Heart right ventricle (tissue), 16 donors: ENCODE measurements at regions of chr2 and their contacts with region 1.

Region 1: GRCh38 chr2:106085181-106085940 is 108.7 kb downstream of the UXS1 start:
- DNase-seq: peak in 1 of 2 donors; percentile 61
- ATAC-seq: peak in 7 of 8 donors; percentile 31 to 89 (median 76)
- H3K4me3 ChIP-seq: no peak overlapping the region
- H3K27ac ChIP-seq: peak overlapping the region in 1 of 10 donors; percentile 16
- H3K4me1 ChIP-seq: peaks cover 0 to 5% (median 0%) of the 10 kb centered on the region in 9 donors
- H3K27me3 ChIP-seq: no peaks in the 10 kb centered on the region
- CTCF ChIP-seq: peak in 8 of 9 donors; percentile 26 to 71 (median 54)

Region 2: GRCh38 chr2:105749583-105750400 is 335.6 kb before region 1 on chr2:
- intact Hi-C with region 1: loop called in 3 of 10 experiments (anchors 10 kb)
- DNase-seq: no peak
- ATAC-seq: peak in 1 of 8 donors; percentile 20
- H3K4me3 ChIP-seq: peak overlapping the region in 1 of 10 donors; percentile 7
- H3K27ac ChIP-seq: peak overlapping the region in 1 of 10 donors; percentile 94
- H3K4me1 ChIP-seq: peaks cover 13 to 84% (median 69%) of the 10 kb centered on the region in 9 donors
- H3K27me3 ChIP-seq: no peaks in the 10 kb centered on the region
- CTCF ChIP-seq: no peak

Region 3: GRCh38 chr2:105904938-105905337 is 180.4 kb before region 1 on chr2:
- intact Hi-C with region 1: loop called in 1 of 10 experiments (anchors 10 kb)
- DNase-seq: no peak
- ATAC-seq: no peak
- H3K4me3 ChIP-seq: no peak overlapping the region
- H3K27ac ChIP-seq: no peak overlapping the region
- H3K4me1 ChIP-seq: peaks cover 0 to 40% (median 8%) of the 10 kb centered on the region in 9 donors
- H3K27me3 ChIP-seq: no peaks in the 10 kb centered on the region
- CTCF ChIP-seq: no peak

Region 4: DNA sequence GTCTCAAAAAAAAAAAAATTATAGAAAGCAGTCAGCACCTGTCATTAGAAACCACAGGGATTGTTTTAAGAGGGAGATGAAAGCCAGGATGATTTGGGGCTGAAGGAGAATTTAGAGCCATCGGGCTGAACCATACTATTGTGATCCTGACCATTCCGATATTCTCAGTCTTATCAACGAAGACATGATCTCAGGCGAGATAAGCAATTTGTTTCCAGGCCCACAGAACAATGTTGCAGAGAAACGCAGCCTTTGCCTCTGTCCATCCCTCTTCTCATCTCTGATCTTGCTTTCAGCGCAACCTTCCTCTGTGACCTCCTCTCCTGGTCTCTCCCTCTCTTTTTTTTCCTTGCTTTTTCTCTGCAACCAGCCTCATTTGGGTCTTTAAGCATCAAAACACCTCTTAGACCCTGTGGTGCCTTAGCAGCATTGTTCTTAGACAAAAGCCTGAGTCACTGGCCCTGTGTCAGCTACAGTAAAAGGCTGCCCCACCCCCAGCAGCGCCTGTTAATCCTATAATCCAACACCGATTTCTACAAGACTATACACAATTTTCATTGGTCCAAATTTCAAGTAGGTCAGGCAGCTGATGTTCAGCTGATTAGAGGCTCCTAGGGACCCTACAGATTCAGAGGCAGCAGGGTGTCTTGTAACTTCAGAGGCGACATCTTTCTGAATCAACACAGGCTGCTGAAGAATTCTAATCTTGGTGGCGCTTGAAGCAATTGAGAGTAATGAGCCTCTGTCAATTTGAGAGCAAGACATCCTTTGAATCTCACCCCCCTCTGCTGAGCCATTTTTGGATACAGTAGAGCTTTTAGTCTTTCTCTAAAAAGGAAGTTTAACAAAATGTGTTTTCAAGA is 134.6 kb before region 1 on chr2:
- intact Hi-C with region 1: loop called in 1 of 10 experiments (anchors 10 kb)
- DNase-seq: peak in 1 of 2 donors; percentile 22
- ATAC-seq: peak in 3 of 8 donors; percentile 38 to 71 (median 53)
- H3K4me3 ChIP-seq: no peak overlapping the region
- H3K27ac ChIP-seq: peak overlapping the region in 1 of 10 donors; percentile 0
- H3K4me1 ChIP-seq: peaks cover 0 to 30% (median 12%) of the 10 kb centered on the region in 9 donors
- H3K27me3 ChIP-seq: peaks cover 0 to 5% (median 0%) of the 10 kb centered on the region in 7 donors
- CTCF ChIP-seq: no peak

Region 5: GRCh38 chr2:106175086-106175850 is 89.9 kb after region 1 on chr2:
- intact Hi-C with region 1: no loop called
- DNase-seq: no peak
- ATAC-seq: no peak
- H3K4me3 ChIP-seq: no peak overlapping the region
- H3K27ac ChIP-seq: no peak overlapping the region
- H3K4me1 ChIP-seq: peaks cover 0 to 7% (median 0%) of the 10 kb centered on the region in 9 donors
- H3K27me3 ChIP-seq: no peaks in the 10 kb centered on the region
- CTCF ChIP-seq: no peak